Endothelial cell of umbilical vein (primary cell): ENCODE measurements at regions of chr18 and their contacts with region 1.

Region 1: GRCh38 chr18:68660354-68661183 is 54.3 kb downstream of the TMX3 start:
- DNase-seq: peak; percentile 42
- H3K4me3 ChIP-seq: no peak overlapping the region
- H3K27ac ChIP-seq: no peak overlapping the region
- H3K4me1 ChIP-seq: no peaks in the 10 kb centered on the region
- H3K27me3 ChIP-seq: peaks cover 0 to 1% of the 10 kb centered on the region in 2 experiments
- CTCF ChIP-seq: peak; percentile 24 to 32
- POLR2A ChIP-seq: no peak

Region 2: DNA sequence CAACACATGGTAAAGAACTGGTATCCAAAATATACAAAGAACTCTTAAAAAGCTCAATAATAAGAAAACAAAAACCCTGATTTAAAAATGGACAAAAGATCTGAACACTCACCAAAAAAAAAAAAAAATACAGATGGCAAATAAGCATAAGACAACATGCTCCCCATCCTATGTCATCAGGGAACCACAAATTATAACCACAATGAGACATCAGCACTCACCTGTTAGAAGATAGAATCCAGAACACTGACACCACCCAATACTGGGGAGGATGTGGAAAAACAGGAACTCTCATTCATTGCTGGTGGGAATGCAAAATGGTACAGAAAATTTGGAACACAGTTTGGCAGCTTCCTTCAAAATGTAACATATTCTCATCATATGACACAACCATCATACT is 12.4 kb before region 1 on chr18:
- CTCF ChIA-PET with region 1: interaction called, 20 read pairs
- POLR2A ChIA-PET with region 1: no interaction called
- dilution Hi-C with region 1: no loop called
- intact Hi-C with region 1: no loop called
- DNase-seq: no peak
- H3K4me3 ChIP-seq: no peak overlapping the region
- H3K27ac ChIP-seq: no peak overlapping the region
- H3K4me1 ChIP-seq: no peaks in the 10 kb centered on the region
- H3K27me3 ChIP-seq: peaks cover 0 to 3% of the 10 kb centered on the region in 2 experiments
- CTCF ChIP-seq: no peak
- POLR2A ChIP-seq: no peak